Calu3 (cell line): ENCODE measurements at regions of chr12 and their contacts with region 1.

Region 1: DNA sequence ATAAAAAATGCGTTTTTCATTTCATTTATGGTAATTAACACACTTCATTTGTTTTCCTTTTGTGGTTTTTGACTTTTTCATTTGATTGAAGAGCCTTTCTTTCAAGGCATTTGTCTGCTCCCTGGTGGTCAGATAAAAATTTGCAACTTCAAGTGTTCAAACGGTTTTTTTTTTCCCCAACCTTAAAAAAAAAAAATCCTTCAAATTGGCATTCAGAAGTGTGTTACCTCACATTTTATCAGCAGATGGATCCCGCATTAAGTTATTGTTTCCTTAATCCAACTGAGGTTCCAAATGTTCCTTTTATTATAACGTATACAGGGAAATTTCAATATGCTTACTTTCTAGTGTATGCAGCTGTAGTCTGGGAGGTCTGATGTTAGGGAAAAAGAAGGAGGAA is 47.2 kb downstream of the MYF5 start:
- DNase-seq: peak; percentile 39
- H3K4me3 Mint-ChIP-seq: no peak overlapping the region
- H3K27ac Mint-ChIP-seq: no peak overlapping the region
- H3K4me1 Mint-ChIP-seq: no peaks in the 10 kb centered on the region
- H3K27me3 Mint-ChIP-seq: no peaks in the 10 kb centered on the region
- CTCF ChIP-seq: peak; percentile 36

Region 2: DNA sequence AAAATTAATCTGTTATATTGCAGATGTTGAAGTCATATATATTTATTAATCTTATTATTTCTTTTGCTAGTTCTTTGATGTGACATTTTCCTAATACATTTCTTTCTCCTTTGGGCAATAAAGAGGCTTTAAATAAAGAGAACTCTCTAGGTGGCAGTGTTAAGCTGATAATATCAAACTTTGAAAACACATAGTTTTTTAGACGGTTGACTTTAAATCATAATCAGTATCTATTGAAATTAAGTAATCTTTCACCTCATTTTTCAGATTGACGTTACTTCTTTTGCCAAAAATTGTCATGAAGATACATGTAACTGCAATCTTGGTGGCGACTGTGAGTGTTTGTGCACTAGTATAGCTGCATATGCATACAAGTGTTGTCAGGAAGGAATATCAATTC is 450.7 kb before region 1 on chr12:
- CTCF ChIA-PET with region 1: interaction called, 4 read pairs
- intact Hi-C with region 1: loop called (anchors 10 kb)
- DNase-seq: no peak
- H3K4me3 Mint-ChIP-seq: no peak overlapping the region
- H3K27ac Mint-ChIP-seq: no peak overlapping the region
- H3K4me1 Mint-ChIP-seq: peaks cover 10% of the 10 kb centered on the region
- H3K27me3 Mint-ChIP-seq: no peaks in the 10 kb centered on the region
- CTCF ChIP-seq: no peak

Region 3: DNA sequence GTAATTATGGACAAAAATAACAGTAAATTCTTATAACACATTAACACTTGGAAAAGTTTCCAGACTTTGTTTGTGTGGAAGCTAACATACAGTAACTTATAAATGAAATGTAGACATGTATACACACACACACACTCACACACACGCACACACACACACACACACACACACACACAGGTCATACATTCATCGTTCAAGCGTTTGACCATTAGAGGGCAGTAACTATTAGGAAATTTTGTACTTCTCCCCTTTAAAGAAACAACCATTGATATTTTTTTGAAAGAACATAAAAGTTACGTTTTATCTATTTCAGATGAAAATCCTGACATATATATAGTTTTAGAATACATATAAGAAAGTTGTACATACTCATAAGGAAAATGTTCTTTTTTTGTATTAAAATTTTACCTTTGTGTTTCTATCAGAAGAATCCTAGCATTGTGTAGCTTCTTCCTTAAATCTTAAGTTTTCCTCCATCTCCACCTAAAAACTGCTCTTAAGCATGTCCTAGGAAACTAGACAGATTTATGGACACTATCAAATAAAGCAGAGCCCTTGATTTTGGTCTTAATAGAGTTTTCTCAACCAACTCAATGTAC is 290.9 kb before region 1 on chr12:
- CTCF ChIA-PET with region 1: no interaction called
- intact Hi-C with region 1: loop called (anchors 1 kb)
- DNase-seq: peak; percentile 49
- H3K4me3 Mint-ChIP-seq: no peak overlapping the region
- H3K27ac Mint-ChIP-seq: no peak overlapping the region
- H3K4me1 Mint-ChIP-seq: no peaks in the 10 kb centered on the region
- H3K27me3 Mint-ChIP-seq: no peaks in the 10 kb centered on the region
- CTCF ChIP-seq: peak; percentile 30